SK-N-SH (cell line): ENCODE measurements at regions of chr11 and their contacts with region 1.

Region 1: GRCh38 chr11:73350908-73351636 is 25.1 kb upstream of the RELT start:
- DNase-seq: peak; percentile 90
- H3K4me3 ChIP-seq: no peak overlapping the region; a peak in 1 of 4 replicates
- H3K27ac ChIP-seq: no peak overlapping the region
- H3K4me1 ChIP-seq: no peaks in the 10 kb centered on the region; a peak in 1 of 4 replicates
- H3K27me3 ChIP-seq: no peaks in the 10 kb centered on the region
- CTCF ChIP-seq: peak; percentile 99
- EP300 ChIP-seq: no peak
- RAD21 ChIP-seq: peak; percentile 79

Region 2: GRCh38 chr11:73307323-73308002 is 43.6 kb before region 1 on chr11:
- CTCF ChIA-PET with region 1: interaction called, 94 read pairs
- POLR2A ChIA-PET with region 1: no interaction called
- DNase-seq: peak; percentile 97
- H3K4me3 ChIP-seq: peak overlapping the region; percentile 76 to 86
- H3K27ac ChIP-seq: peak overlapping the region; percentile 93 to 97
- H3K4me1 ChIP-seq: peaks cover 35 to 40% of the 10 kb centered on the region in 2 experiments
- H3K27me3 ChIP-seq: no peaks in the 10 kb centered on the region
- CTCF ChIP-seq: peak; percentile 90
- EP300 ChIP-seq: peak in 1 of 2 experiments; percentile 39; a peak in 1 of 4 replicates
- RAD21 ChIP-seq: peak; percentile 96

Region 3: GRCh38 chr11:73376160-73376802 is 25.2 kb after region 1 on chr11 and contains the start of gene RELT:
- CTCF ChIA-PET with region 1: interaction called, 313 read pairs
- POLR2A ChIA-PET with region 1: no interaction called
- DNase-seq: peak; percentile 99
- H3K4me3 ChIP-seq: peak within 1 kb of the TSS; percentile 67 to 87
- H3K27ac ChIP-seq: peak within 1 kb of the TSS; percentile 64 to 71
- H3K4me1 ChIP-seq: peaks cover 3 to 19% of the 10 kb centered on the region in 2 experiments; a peak in 1 of 4 replicates
- H3K27me3 ChIP-seq: no peaks in the 10 kb centered on the region
- CTCF ChIP-seq: peak; percentile 73
- EP300 ChIP-seq: no peak
- RAD21 ChIP-seq: peak; percentile 53
- polyA plus RNA-seq, gene RELT: 4.3 and 5.5 TPM in 2 replicates

Region 4: GRCh38 chr11:73393479-73394380 is 42.7 kb after region 1 on chr11:
- CTCF ChIA-PET with region 1: interaction called, 144 read pairs
- POLR2A ChIA-PET with region 1: no interaction called
- DNase-seq: peak; percentile 94
- H3K4me3 ChIP-seq: no peak overlapping the region; a peak in 1 of 4 replicates
- H3K27ac ChIP-seq: no peak overlapping the region
- H3K4me1 ChIP-seq: no peaks in the 10 kb centered on the region; a peak in 1 of 4 replicates
- H3K27me3 ChIP-seq: no peaks in the 10 kb centered on the region
- CTCF ChIP-seq: peak; percentile 81
- EP300 ChIP-seq: no peak
- RAD21 ChIP-seq: peak; percentile 92

Region 5: DNA sequence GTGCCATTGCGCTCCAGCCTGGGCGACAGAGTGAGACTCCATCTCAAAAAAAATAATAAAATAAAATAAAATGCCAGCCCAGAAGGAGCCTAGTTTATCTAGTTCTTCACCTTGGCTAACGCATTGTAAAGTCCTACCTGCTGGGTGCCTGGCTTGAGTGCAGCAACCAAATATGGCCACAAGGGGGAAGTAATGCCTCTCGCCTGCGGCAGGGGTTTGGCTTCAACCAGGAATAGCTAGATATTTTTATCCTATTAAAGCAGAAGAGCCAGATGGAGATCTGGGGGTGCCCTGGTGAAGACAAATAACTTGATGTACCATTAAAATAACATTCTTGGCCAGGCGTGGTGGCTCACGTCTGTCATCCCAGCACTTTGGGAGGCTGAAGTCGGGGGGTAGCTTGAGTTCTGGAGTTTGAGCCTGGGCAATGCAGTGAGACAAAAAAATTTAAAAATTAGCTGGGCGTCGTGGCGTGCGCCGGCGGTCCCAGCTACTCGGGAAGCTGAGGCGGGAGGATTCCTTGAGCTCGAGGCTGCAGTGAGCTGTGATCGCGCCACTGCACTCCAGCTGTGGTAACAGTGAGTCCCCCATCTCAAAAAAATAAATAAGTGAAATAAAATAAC is 274.7 kb after region 1 on chr11:
- CTCF ChIA-PET with region 1: interaction called, 11 read pairs
- POLR2A ChIA-PET with region 1: no interaction called
- DNase-seq: peak; percentile 81
- H3K4me3 ChIP-seq: peak overlapping the region in 1 of 2 experiments; percentile 45; a peak in 1 of 4 replicates
- H3K27ac ChIP-seq: no peak overlapping the region
- H3K4me1 ChIP-seq: no peaks in the 10 kb centered on the region
- H3K27me3 ChIP-seq: no peaks in the 10 kb centered on the region; the same call in 1 of the 2 replicates
- CTCF ChIP-seq: peak; percentile 92
- EP300 ChIP-seq: no peak
- RAD21 ChIP-seq: peak; percentile 81